ENCODE measurements at regions of chr17 and their contacts with region 1.

Region 1: GRCh38 chr17:17305281-17305801 is 2.2 kb downstream of the NT5M start:
- DNase-seq: peak; percentile 36 to 63 (median 52)
- H3K4me3 ChIP-seq: no peak overlapping the region
- H3K4me3 Mint-ChIP-seq: peak overlapping the region; percentile 73 to 92 (median 86)
- H3K27ac ChIP-seq: no peak overlapping the region
- H3K27ac Mint-ChIP-seq: peak overlapping the region; percentile 76 to 95 (median 94)
- H3K4me1 ChIP-seq: peaks cover 42% of the 10 kb centered on the region
- H3K4me1 Mint-ChIP-seq: peaks cover 22 to 36% (median 32%) of the 10 kb centered on the region in 4 donors
- H3K27me3 ChIP-seq: no peaks in the 10 kb centered on the region
- H3K27me3 Mint-ChIP-seq: no peaks in the 10 kb centered on the region

Region 2: GRCh38 chr17:17237026-17237799 is 68.1 kb before region 1 on chr17 and contains the start of gene FLCN:
- CTCF ChIA-PET with region 1: no interaction called
- POLR2A ChIA-PET with region 1: interaction called, 16 read pairs
- intact Hi-C with region 1: no loop called
- DNase-seq: peak; percentile 91 to 95 (median 92)
- H3K4me3 ChIP-seq: peak within 1 kb of the TSS; percentile 79 to 82
- H3K4me3 Mint-ChIP-seq: peak within 1 kb of the TSS; percentile 90 to 97 (median 95)
- H3K27ac ChIP-seq: peak within 1 kb of the TSS; percentile 94
- H3K27ac Mint-ChIP-seq: peak within 1 kb of the TSS; percentile 91 to 99 (median 99)
- H3K4me1 ChIP-seq: peaks cover 25% of the 10 kb centered on the region
- H3K4me1 Mint-ChIP-seq: peaks cover 15 to 35% (median 23%) of the 10 kb centered on the region in 4 donors
- H3K27me3 ChIP-seq: no peaks in the 10 kb centered on the region
- H3K27me3 Mint-ChIP-seq: no peaks in the 10 kb centered on the region
- total RNA-seq, gene FLCN: 94.4 to 95.0 TPM

Region 3: DNA sequence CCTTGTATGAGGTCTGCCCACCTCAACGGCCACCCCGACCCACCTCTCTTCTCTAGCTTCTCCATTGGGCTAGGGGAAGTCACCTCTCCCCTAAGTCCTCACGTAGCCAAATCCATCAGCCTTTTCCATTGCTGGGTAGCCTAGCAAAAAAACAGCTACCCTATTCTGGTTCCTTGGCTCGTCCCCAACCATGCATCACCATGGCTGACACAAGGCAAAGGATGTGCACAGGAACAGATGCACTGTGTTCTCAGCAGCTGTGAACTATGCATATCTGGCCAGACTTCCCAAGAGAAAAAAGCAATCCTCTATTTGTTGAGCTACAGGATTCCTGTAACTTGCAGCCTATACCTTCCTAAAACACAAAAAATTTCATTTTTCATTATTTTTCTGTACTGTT is 46.3 kb before region 1 on chr17:
- CTCF ChIA-PET with region 1: no interaction called
- POLR2A ChIA-PET with region 1: no interaction called
- intact Hi-C with region 1: no loop called
- DNase-seq: no peak
- H3K4me3 ChIP-seq: no peak overlapping the region
- H3K4me3 Mint-ChIP-seq: no peak overlapping the region
- H3K27ac ChIP-seq: no peak overlapping the region
- H3K27ac Mint-ChIP-seq: peak overlapping the region in 4 of 7 donors; percentile 7 to 48 (median 21)
- H3K4me1 ChIP-seq: peaks cover 2% of the 10 kb centered on the region
- H3K4me1 Mint-ChIP-seq: peaks cover 0 to 4% (median 0%) of the 10 kb centered on the region in 4 donors
- H3K27me3 ChIP-seq: no peaks in the 10 kb centered on the region
- H3K27me3 Mint-ChIP-seq: no peaks in the 10 kb centered on the region

Region 4: DNA sequence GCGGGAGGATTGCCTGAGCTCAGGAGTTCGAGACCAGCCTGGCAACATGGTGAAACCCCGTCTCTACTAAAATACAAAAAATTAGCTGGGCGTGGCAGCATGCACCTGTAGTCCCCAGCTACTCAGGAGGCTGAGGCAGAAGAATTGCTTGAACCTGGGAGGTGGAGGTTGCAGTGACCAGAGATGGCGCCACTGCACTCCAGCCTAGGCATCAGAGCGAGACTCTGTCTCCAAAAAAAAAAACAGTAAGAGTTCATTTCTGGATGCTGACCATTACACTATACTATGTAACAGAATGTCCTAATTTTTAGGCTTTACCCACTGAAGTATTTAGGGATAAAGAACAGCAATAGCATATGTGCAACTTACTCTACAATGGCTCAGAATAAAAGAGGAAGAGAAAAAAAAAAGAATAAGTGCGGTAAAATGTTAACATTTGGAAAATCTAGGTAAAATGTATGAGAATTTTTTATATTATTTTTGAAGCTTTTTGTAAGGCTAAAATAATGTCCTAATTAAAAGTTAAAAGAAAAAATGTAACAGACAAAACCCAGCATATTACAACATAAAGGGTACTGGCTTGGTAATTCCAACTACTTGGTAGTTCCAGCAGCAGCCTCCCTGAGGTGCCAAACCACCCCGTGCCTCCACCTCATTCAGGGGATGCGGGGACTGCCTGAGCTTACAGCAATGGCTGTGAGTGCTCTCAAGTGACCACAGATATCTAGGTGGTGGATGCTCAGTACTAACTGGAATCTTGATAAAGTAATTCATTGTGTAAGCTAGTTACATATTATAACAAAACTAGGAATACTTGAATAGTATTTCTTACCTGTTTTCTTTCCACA is 35.2 kb before region 1 on chr17:
- CTCF ChIA-PET with region 1: interaction called, 13 read pairs
- POLR2A ChIA-PET with region 1: no interaction called
- intact Hi-C with region 1: loop called (anchors 5 kb)
- DNase-seq: peak in 4 of 5 donors; percentile 16 to 25 (median 17)
- H3K4me3 ChIP-seq: no peak overlapping the region
- H3K4me3 Mint-ChIP-seq: no peak overlapping the region
- H3K27ac ChIP-seq: no peak overlapping the region
- H3K27ac Mint-ChIP-seq: peak overlapping the region in 2 of 7 donors; percentile 14 to 23
- H3K4me1 ChIP-seq: no peaks in the 10 kb centered on the region
- H3K4me1 Mint-ChIP-seq: peaks cover 0 to 5% (median 3%) of the 10 kb centered on the region in 4 donors
- H3K27me3 ChIP-seq: no peaks in the 10 kb centered on the region
- H3K27me3 Mint-ChIP-seq: no peaks in the 10 kb centered on the region

Measured in CD4-positive, alpha-beta memory T cell (primary cell).